ENCODE measurements at regions of chr6 and their contacts with region 1.

Region 1: DNA sequence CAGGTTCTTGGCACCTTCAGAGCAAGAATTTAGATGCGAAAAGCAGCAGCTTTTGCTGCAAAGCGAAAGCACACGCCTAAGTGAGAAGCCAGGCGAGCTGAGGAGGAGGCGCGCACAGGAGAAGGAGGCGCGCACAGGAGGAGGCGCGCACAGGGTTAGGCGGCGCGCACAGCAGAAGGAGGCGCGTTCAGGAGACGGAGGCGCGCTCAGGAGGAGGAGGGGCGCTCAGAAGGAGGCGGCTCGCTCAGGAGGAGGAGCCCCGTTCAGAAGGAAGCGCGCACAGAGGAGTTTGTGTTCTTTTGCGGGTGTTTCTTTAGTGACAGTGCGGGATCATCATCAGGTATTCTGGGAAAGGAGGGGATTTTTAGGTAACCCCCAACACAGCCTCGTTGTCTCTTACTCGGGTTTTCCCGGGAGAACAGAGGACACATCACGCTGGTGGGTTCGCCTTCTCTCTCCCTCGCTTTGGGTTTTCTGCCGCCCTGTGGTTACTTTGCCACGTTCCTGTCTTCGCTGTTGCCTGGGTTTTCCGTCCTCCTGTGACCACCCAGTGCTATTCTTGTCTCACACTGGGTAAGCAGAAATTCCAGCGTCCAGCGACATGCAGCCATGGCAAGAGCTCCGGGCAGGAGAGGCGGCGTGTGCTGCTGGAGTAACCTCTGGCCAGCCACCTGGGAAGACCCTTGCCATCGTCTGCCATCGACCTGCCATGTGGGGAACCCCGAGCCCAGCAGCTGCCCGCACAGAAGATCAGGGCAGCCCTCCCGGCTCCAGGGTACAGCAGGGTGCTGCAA is 47.0 kb downstream of the WDR27 start:
- DNase-seq: peak; percentile 83
- H3K4me3 ChIP-seq: peak overlapping the region in 2 of 3 experiments; percentile 25 to 41
- H3K27ac ChIP-seq: peak overlapping the region; percentile 6
- H3K4me1 ChIP-seq: no peaks in the 10 kb centered on the region
- H3K27me3 ChIP-seq: no peaks in the 10 kb centered on the region
- CTCF ChIP-seq: peak in 1 of 2 donors; percentile 34
- POLR2A ChIP-seq: peak; percentile 25

Region 2: DNA sequence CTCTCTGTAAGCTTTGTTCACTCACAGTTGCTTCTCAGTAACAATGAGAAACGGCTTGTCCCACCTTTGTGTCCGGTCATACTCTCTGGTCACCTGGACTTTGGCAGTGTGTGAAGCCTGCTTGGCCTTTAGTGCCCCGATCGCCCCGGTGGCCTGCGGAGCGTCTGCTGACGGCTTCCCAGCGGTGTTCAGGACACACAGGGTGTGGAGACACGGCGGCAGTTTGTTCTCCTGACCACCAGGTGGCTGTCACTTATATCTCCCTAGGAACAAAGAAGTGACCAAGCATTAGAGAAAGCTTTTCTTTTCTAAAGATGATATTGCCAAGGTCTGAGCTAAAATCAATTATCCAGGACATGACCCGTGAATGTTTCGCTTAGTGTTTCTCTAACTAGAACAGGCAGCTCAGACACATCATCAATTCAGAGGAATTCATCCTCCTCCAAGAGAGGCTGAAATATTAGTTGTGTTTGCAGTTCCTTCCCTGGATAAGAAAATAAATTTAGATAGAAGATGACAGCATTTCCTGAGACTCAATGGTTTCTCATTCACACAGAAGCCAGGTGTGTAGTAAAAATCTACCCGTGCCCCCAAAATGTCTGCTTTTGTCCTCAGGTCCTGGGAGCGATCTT is 233.8 kb before region 1 on chr6:
- CTCF ChIA-PET with region 1: no interaction called
- POLR2A ChIA-PET with region 1: no interaction called
- dilution Hi-C with region 1: no loop called
- intact Hi-C with region 1: loop called (anchors 10 kb)
- DNase-seq: no peak
- H3K4me3 ChIP-seq: no peak overlapping the region
- H3K27ac ChIP-seq: no peak overlapping the region
- H3K4me1 ChIP-seq: no peaks in the 10 kb centered on the region
- H3K27me3 ChIP-seq: no peaks in the 10 kb centered on the region
- CTCF ChIP-seq: no peak
- POLR2A ChIP-seq: no peak

Region 3: GRCh38 chr6:169640351-169640852 is 14.4 kb before region 1 on chr6:
- CTCF ChIA-PET with region 1: no interaction called
- POLR2A ChIA-PET with region 1: no interaction called
- dilution Hi-C with region 1: no loop called
- intact Hi-C with region 1: no loop called
- DNase-seq: no peak
- H3K4me3 ChIP-seq: no peak overlapping the region
- H3K27ac ChIP-seq: no peak overlapping the region
- H3K4me1 ChIP-seq: peaks cover 9% of the 10 kb centered on the region
- H3K27me3 ChIP-seq: no peaks in the 10 kb centered on the region
- CTCF ChIP-seq: no peak
- POLR2A ChIP-seq: no peak

Region 4: DNA sequence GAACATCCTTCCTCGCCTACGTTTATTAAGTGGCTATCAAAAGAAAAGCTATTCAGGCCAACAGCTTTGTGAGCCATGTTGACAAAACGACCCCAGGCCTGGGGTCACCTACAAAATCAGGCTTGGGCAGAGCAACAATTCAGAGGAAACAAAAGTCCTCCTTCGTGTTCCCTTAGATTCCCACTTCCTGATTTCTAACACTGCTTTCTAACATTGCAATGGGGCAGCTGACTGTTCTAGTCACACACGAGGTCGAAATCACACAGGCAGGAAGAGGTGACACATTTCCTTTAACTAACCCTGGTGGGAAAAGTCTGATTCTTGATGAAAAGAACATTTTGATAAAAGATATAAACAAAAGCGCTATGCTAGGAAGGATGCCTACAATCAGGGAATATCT is 15.1 kb after region 1 on chr6:
- CTCF ChIA-PET with region 1: interaction called, 5 read pairs
- POLR2A ChIA-PET with region 1: no interaction called
- dilution Hi-C with region 1: no loop called
- intact Hi-C with region 1: loop called (anchors 1 kb)
- DNase-seq: peak; percentile 98
- H3K4me3 ChIP-seq: no peak overlapping the region
- H3K27ac ChIP-seq: peak overlapping the region; percentile 98
- H3K4me1 ChIP-seq: peaks cover 26% of the 10 kb centered on the region
- H3K27me3 ChIP-seq: no peaks in the 10 kb centered on the region
- CTCF ChIP-seq: no peak
- POLR2A ChIP-seq: no peak